Activated naive CD4-positive, alpha-beta T cell treated with anti-CD3 and anti-CD28 coated beads for 36 hours (primary cell): ENCODE measurements at regions of chr14 and their contacts with region 1.

Region 1: GRCh38 chr14:22929104-22929847 is at the start of gene PRMT5:
- DNase-seq: peak; percentile 99
- H3K4me3 Mint-ChIP-seq: no peak within 1 kb of the TSS
- H3K27ac Mint-ChIP-seq: no peak within 1 kb of the TSS
- H3K4me1 Mint-ChIP-seq: peaks cover 34% of the 10 kb centered on the region
- H3K27me3 Mint-ChIP-seq: no peaks in the 10 kb centered on the region
- total RNA-seq, gene PRMT5: 81.0 to 92.8 TPM

Region 2: DNA sequence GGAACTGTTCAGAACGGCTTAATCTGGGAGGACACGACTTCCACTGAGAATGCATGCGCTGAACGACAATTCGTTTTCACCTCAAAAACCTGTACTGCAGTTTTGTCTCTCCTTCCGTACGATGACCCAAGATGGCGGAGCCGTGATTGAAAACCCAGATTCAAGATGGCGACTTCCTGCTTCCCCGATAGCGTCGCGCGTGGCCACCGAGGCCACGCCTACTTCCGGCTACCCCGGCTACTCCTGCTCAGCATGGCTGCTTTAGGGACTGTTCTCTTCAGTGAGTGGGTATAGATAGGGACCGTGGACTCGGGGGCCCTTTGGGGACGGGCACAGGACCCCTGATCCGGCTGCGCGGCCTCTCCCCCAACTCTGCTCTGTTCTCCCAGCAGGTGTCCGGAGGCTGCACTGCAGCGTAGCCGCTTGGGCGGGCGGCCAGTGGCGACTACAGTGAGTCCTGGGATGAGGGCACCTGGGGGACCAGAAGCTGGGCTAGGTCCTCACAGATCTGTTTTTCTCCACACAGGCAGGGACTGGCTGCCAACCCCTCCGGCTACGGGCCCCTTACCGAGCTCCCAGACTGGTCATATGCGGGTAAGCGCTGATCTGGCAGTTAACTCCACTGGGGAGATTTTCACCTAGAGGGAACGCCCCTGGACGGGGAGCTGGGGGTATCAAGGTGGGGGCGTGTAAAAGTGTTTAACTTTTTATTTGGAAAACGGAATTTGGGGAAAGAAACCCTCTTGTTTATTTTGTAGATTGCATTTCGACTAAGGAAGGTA is 99.4 kb before region 1 on chr14 and contains the start of gene MRPL52:
- CTCF ChIA-PET with region 1: interaction called, 3 read pairs
- intact Hi-C with region 1: loop called (anchors 1 kb)
- DNase-seq: peak; percentile 94
- H3K4me3 Mint-ChIP-seq: peak within 1 kb of the TSS; percentile 94
- H3K27ac Mint-ChIP-seq: peak within 1 kb of the TSS; percentile 97
- H3K4me1 Mint-ChIP-seq: peaks cover 34% of the 10 kb centered on the region
- H3K27me3 Mint-ChIP-seq: no peaks in the 10 kb centered on the region
- total RNA-seq, gene MRPL52: 170 TPM

Region 3: GRCh38 chr14:22918804-22919600 is 10.3 kb before region 1 on chr14 and contains the start of gene RBM23:
- CTCF ChIA-PET with region 1: interaction called, 40 read pairs
- intact Hi-C with region 1: loop called (anchors 1 kb)
- DNase-seq: peak; percentile 100
- H3K4me3 Mint-ChIP-seq: peak within 1 kb of the TSS; percentile 94
- H3K27ac Mint-ChIP-seq: peak within 1 kb of the TSS; percentile 99
- H3K4me1 Mint-ChIP-seq: peaks cover 42% of the 10 kb centered on the region
- H3K27me3 Mint-ChIP-seq: peaks cover 3% of the 10 kb centered on the region
- total RNA-seq, gene RBM23: 53.5 to 61.2 TPM

Region 4: DNA sequence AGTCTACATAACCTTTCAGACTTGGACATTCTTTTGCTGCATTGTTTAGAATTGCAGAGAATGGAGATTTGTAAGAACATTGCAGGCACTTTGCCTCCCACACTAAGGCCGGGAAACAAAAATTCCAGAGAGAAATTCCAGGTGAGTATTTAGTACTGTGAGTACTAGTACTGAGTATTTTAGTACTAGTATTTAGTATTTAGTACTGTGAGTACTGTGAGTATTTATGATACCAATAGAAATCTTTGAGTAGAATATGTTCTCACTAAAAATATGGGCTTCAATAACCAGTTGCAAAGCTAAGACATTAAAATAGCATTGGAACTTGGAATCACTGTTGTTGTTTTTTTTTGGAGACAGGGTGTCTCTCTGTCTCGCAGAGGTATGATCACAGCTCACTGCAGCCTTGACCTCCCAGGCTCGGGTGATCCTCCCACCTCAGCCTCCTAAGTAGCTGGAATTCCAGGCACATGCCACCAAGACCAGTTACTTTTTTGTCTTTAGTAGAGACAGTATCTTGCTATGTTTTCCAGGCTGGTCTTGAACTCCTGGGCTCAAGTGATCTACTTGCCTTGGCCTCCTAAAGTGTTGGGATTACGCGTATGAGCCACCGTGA is 32.9 kb after region 1 on chr14:
- CTCF ChIA-PET with region 1: interaction called, 38 read pairs
- intact Hi-C with region 1: loop called (anchors 1 kb)
- DNase-seq: no peak
- H3K4me3 Mint-ChIP-seq: no peak overlapping the region
- H3K27ac Mint-ChIP-seq: no peak overlapping the region
- H3K4me1 Mint-ChIP-seq: peaks cover 5% of the 10 kb centered on the region
- H3K27me3 Mint-ChIP-seq: no peaks in the 10 kb centered on the region

Region 5: DNA sequence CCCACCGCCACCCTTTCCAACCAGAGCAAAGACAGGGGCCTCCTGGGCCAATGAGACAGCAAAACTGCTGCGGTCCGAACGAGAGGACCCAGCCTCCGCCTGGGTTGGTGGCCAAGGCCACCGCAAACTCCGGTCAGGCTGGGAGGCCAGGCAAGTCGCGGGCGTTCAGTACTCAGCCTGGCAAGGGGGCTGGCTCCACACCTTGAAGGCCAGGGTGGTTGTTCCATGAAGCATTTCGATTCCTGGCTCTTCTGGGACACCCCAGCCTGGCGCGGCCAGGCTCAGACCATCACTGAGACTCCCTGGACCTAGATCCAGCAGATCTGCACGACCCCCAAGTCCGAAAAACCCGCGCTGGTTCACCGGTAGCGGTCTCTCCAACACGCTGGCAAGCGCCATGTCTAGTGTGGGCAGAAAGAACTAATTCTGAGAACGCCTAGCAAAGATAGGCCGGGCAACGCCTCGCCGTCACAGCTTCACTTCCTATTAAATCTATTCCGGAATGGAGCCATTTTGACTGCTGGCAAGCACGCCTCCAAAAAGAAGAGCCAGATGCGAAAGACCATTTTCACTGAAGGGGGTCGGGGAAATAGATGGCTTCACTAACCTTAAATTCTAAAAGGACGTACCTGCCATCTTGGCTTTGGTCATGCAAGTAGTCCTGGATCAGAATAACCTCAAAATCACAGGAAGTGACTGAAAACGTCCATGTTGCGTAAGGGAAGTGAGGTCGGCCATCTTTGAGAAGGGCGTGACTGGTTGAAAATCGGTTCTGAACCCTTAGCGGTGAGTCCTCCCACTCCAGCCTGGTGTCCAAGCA is 105.4 kb after region 1 on chr14 and contains the start of gene PSMB5:
- CTCF ChIA-PET with region 1: interaction called, 4 read pairs
- intact Hi-C with region 1: loop called (anchors 1 kb)
- DNase-seq: peak; percentile 96
- H3K4me3 Mint-ChIP-seq: peak within 1 kb of the TSS; percentile 88
- H3K27ac Mint-ChIP-seq: peak within 1 kb of the TSS; percentile 96
- H3K4me1 Mint-ChIP-seq: peaks cover 34% of the 10 kb centered on the region
- H3K27me3 Mint-ChIP-seq: no peaks in the 10 kb centered on the region
- total RNA-seq, gene PSMB5: 120 to 125 TPM

Region 6: GRCh38 chr14:23286020-23286905 is 357.0 kb after region 1 on chr14 and contains the start of gene HOMEZ:
- CTCF ChIA-PET with region 1: no interaction called
- intact Hi-C with region 1: loop called (anchors 1 kb)
- DNase-seq: peak; percentile 99
- H3K4me3 Mint-ChIP-seq: peak within 1 kb of the TSS; percentile 99
- H3K27ac Mint-ChIP-seq: peak within 1 kb of the TSS; percentile 96
- H3K4me1 Mint-ChIP-seq: peaks cover 29% of the 10 kb centered on the region
- H3K27me3 Mint-ChIP-seq: no peaks in the 10 kb centered on the region
- total RNA-seq, gene HOMEZ: 6.3 to 7.8 TPM